ENCODE measurements at regions of chr4 and their contacts with region 1.

Region 1: GRCh38 chr4:177339477-177340374 is 30.1 kb downstream of the NEIL3 start:
- DNase-seq: no peak
- H3K4me3 ChIP-seq: no peak overlapping the region
- H3K27ac ChIP-seq: no peak overlapping the region
- H3K27me3 ChIP-seq: no peaks in the 10 kb centered on the region
- CTCF ChIP-seq: peak; percentile 47 to 81 (median 68)

Region 2: DNA sequence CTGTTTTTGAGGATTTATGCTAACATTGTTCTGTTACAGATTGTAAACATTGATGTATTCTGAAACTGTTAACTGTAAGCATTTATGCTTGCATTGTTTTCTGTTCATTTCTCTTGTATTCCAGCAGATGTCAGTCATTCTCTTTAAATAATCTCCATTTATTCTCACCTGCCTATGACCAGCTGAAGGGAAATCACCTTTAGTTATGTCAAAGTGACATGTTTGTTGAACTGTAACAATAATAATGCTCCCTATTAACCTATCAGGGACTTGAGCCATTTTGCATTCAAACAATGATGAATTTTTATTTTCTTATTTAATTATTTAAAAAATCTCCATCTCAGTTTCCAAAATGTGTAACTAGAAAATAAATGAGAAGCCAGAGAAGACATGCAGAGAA is 961.9 kb before region 1 on chr4:
- intact Hi-C with region 1: loop called in 1 of 2 experiments (anchors 10 kb)
- DNase-seq: no peak
- H3K4me3 ChIP-seq: peak overlapping the region in 2 of 59 donors; percentile 1
- H3K27ac ChIP-seq: peak overlapping the region in 5 of 59 donors; percentile 13 to 40 (median 31)
- H3K27me3 ChIP-seq: no peaks in the 10 kb centered on the region
- CTCF ChIP-seq: peak; percentile 39 to 84 (median 72)

Region 3: DNA sequence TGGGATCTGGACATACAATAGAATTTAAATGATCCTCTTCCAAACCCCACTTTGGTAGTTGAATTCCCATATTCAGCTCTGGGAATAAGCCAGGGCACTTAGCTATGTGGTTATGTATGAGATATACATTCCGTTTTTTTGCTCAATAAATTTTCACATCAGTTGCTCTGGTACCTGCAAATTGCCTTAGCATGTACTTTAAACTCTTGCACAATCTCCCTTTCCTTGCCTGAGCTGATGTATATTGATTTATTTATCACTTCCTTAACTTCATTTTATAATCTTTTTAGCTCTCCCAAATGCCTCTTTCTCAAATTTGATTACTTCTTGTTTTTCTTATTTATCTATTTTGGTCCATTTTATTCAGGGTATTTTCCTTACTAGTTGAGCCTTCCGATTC is 192.6 kb after region 1 on chr4:
- intact Hi-C with region 1: no loop called
- DNase-seq: no peak
- H3K4me3 ChIP-seq: no peak overlapping the region
- H3K27ac ChIP-seq: no peak overlapping the region
- H3K27me3 ChIP-seq: no peaks in the 10 kb centered on the region
- CTCF ChIP-seq: no peak

Measured in dorsolateral prefrontal cortex (tissue), 120 donors.